ENCODE measurements at regions of chr12 and their contacts with region 1.

Region 1: GRCh38 chr12:56636675-56637540 is 6.8 kb upstream of the BAZ2A start:
- DNase-seq: peak; percentile 87
- ATAC-seq: peak; percentile 69
- H3K4me3 ChIP-seq: peak overlapping the region; percentile 91
- H3K27ac ChIP-seq: peak overlapping the region; percentile 87
- H3K4me1 ChIP-seq: peaks cover 21% of the 10 kb centered on the region
- H3K27me3 ChIP-seq: no peaks in the 10 kb centered on the region
- CTCF ChIP-seq: peak; percentile 72 to 89 (median 81)
- EP300 ChIP-seq: 0 out of 4 replicates have a peak, but pooled peaks of 1 of the 2 experiments have one; percentile 22
- POLR2A ChIP-seq: no peak
- RAD21 ChIP-seq: peak; percentile 72

Region 2: DNA sequence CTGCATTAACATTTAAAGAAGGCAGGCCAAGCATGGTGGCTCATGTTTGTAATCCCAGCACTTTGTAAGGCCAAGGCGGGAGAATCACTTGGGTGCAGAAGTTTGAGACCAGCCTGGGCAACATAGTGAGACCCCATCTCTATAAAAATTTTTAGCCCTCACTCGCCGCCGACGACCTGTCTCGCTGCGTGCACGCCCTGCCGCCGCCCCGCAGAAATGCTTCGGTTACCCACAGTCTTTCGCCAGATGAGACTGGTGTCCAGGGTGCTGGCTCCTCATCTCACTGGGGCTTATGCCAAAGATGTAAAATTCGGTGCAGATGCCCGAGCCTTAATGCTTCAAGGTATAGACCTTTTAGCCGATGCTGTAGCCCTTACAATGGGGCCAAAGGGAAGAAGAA is 126.1 kb before region 1 on chr12:
- CTCF ChIA-PET with region 1: interaction called, 73 read pairs
- POLR2A ChIA-PET with region 1: interaction called, 19 read pairs
- RAD21 ChIA-PET with region 1: interaction called, 33 read pairs
- SMC1A ChIA-PET with region 1: interaction called, 41 read pairs
- in situ Hi-C with region 1: no loop called
- intact Hi-C with region 1: loop called (anchors 2 kb)
- DNase-seq: no peak
- ATAC-seq: no peak
- H3K4me3 ChIP-seq: no peak overlapping the region
- H3K27ac ChIP-seq: no peak overlapping the region
- H3K4me1 ChIP-seq: no peaks in the 10 kb centered on the region
- H3K27me3 ChIP-seq: no peaks in the 10 kb centered on the region
- CTCF ChIP-seq: no peak
- EP300 ChIP-seq: no peak
- POLR2A ChIP-seq: no peak
- RAD21 ChIP-seq: no peak

Region 3: DNA sequence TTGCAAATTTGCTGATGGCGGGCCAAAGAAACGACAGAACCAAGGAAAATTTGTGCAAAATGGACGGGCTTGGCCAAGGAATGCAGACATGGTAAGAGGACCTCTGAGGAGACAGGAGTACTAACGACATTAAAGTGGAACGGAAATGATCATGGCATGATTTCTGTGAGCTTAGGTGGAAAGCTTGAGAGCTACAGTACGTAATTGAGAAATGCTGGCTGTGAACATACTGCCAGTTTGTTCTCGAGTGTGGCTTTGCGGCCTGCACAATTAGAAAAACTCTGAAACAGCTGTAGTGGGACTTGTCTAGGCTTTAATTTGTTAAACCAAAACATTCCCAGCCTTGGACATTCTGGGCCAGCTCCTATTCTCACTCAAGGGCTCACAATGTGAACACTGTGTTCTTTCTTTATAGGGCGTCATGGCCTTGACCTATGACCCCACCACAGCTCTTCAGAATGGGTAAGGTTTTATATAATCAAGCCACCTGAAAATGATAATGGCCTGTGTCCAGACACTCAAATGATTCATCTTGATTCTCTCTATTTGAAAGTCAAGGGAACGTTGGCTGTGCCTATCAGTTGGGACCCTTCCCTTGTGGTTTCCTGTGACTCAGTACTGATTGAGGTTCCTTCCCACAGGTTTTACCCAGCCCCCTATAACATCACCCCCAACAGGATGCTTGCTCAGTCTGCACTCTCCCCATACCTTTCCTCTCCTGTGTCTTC is 55.3 kb before region 1 on chr12:
- CTCF ChIA-PET with region 1: interaction called, 7 read pairs
- POLR2A ChIA-PET with region 1: no interaction called
- RAD21 ChIA-PET with region 1: interaction called, 9 read pairs
- SMC1A ChIA-PET with region 1: interaction called, 10 read pairs
- in situ Hi-C with region 1: no loop called
- intact Hi-C with region 1: no loop called
- DNase-seq: peak; percentile 35
- ATAC-seq: peak; percentile 88
- H3K4me3 ChIP-seq: no peak overlapping the region
- H3K27ac ChIP-seq: no peak overlapping the region
- H3K4me1 ChIP-seq: no peaks in the 10 kb centered on the region
- H3K27me3 ChIP-seq: no peaks in the 10 kb centered on the region
- CTCF ChIP-seq: no peak
- EP300 ChIP-seq: no peak
- POLR2A ChIP-seq: no peak
- RAD21 ChIP-seq: no peak

Region 4: DNA sequence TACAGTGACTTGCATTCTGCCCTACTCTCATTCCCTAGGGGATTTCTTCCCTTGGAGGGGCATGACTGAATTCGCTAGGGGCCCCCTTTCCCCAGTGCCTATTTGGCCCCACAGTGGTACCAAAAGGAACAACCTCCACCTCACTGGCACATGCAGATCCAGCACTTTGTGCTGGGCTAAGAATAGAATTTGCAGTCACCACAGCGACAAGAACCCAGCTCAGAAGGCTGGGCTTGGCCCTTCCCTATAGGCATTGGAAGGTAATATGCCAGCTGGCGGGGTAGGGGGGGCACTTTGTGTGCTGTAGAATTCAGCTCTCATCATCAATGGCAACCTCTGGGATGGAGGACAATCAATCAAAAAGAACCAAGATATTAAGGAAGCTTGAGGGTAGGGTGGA is 20.7 kb before region 1 on chr12:
- CTCF ChIA-PET with region 1: interaction called, 16 read pairs
- POLR2A ChIA-PET with region 1: interaction called, 54 read pairs
- RAD21 ChIA-PET with region 1: interaction called, 6 read pairs
- SMC1A ChIA-PET with region 1: interaction called, 68 read pairs
- in situ Hi-C with region 1: no loop called
- intact Hi-C with region 1: no loop called
- DNase-seq: no peak
- ATAC-seq: no peak
- H3K4me3 ChIP-seq: no peak overlapping the region
- H3K27ac ChIP-seq: no peak overlapping the region
- H3K4me1 ChIP-seq: no peaks in the 10 kb centered on the region
- H3K27me3 ChIP-seq: no peaks in the 10 kb centered on the region
- CTCF ChIP-seq: no peak
- EP300 ChIP-seq: no peak
- POLR2A ChIP-seq: no peak
- RAD21 ChIP-seq: no peak

Region 5: DNA sequence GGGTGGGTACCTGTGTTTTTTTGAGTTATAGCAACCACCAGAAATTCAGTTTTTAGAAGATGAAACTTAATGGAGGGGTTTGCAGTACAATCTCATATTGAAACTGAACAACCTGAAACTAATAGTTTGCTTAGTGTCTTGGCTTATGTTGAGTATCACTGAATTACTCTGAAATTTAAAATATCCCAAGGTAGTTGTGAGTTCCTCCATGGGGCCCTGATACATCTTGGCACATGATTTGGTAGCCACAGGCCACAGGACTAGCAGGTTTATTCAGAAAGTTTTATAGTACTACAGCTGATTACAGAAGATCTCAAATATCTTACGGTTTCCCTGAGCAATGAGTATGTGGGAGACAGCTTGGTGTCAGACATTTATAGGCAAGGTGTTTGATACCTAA is 40.8 kb after region 1 on chr12:
- CTCF ChIA-PET with region 1: interaction called, 58 read pairs
- POLR2A ChIA-PET with region 1: interaction called, 155 read pairs
- RAD21 ChIA-PET with region 1: interaction called, 176 read pairs
- SMC1A ChIA-PET with region 1: interaction called, 5 read pairs
- in situ Hi-C with region 1: no loop called
- intact Hi-C with region 1: no loop called
- DNase-seq: no peak
- ATAC-seq: peak; percentile 80
- H3K4me3 ChIP-seq: no peak overlapping the region
- H3K27ac ChIP-seq: peak overlapping the region; percentile 52; the same call in 1 of the 2 replicates
- H3K4me1 ChIP-seq: peaks cover 42% of the 10 kb centered on the region
- H3K27me3 ChIP-seq: no peaks in the 10 kb centered on the region
- CTCF ChIP-seq: no peak
- EP300 ChIP-seq: no peak
- POLR2A ChIP-seq: no peak
- RAD21 ChIP-seq: no peak

Region 6: DNA sequence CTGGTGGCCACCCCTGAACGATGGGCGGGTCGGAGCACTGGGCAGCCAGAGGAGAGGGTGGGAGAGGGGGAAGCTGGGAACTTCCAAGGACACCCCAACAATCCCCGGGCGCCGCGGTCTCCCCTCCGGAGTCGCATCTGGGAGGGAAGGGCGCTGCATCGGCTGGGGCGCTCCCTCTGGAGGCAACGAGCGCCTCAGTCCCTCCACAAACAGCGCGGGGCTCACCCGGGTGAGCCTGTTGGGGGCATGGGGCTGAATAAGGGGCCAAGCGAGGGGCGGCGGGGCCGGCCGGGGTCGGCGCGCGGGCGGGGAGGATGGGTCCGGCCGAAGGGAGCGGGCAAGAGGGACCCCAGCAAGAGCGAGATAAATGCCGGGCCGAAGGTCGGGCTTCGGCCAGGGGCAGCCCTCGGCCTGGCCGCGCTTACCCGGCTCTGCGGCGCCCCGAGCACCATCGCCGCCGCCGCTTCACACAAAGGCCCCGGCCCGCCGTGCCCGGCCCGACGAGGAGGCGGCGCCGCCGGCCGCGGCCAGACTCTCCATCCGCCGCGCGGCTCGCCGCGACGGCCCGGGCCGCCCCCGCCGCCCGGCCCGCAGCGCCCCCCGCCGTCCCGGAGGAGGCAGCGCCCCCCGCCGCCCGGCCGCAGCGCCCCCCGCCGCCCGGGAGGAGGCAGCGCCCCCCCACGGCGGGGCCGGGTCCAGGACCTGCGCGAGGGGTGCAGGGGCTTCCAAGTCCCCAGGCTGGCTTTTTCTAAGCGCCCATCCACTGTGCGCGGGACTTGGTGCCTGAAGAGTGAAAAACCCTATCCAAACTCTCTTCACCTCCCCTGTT is 369.3 kb after region 1 on chr12 and contains the start of gene ZBTB39:
- CTCF ChIA-PET with region 1: interaction called, 8 read pairs
- POLR2A ChIA-PET with region 1: no interaction called
- RAD21 ChIA-PET with region 1: interaction called, 8 read pairs
- SMC1A ChIA-PET with region 1: interaction called, 11 read pairs
- in situ Hi-C with region 1: no loop called
- intact Hi-C with region 1: no loop called
- DNase-seq: no peak
- ATAC-seq: peak; percentile 82
- H3K4me3 ChIP-seq: peak within 1 kb of the TSS; percentile 93
- H3K27ac ChIP-seq: peak within 1 kb of the TSS; percentile 28; the same call in 1 of the 2 replicates
- H3K4me1 ChIP-seq: peaks cover 10% of the 10 kb centered on the region
- H3K27me3 ChIP-seq: no peaks in the 10 kb centered on the region
- CTCF ChIP-seq: peak; percentile 48 to 61 (median 58)
- EP300 ChIP-seq: no peak
- POLR2A ChIP-seq: peak; percentile 79
- RAD21 ChIP-seq: peak; percentile 26; the same call in 1 of the 2 replicates
- polyA plus RNA-seq, gene ZBTB39: 0.88 to 0.93 TPM